Endothelial cell of umbilical vein (primary cell): ENCODE measurements at regions of chr3 and their contacts with region 1.

Region 1: DNA sequence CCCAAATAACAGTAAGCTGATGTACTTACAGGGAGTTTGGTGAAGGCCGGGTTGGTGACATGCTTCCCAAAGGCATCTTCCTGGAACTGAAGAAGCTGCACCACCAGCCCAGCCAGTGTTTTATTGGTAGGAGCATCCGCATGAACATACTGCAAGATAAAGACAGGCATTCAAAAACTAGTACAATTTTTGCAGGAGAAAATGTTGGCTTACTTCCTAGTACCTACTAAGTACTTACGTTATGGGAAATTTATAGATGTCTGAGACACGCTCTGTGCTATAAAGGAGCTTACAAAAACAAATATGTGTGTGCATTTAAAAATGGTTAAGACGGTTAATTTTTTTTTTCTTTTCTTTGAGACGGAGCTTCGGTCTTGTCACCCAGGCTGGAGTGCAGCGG is 8.9 kb downstream of the SMARCC1 start:
- DNase-seq: no peak
- H3K4me3 ChIP-seq: no peak overlapping the region
- H3K27ac ChIP-seq: no peak overlapping the region
- H3K4me1 ChIP-seq: no peaks in the 10 kb centered on the region
- H3K27me3 ChIP-seq: no peaks in the 10 kb centered on the region
- CTCF ChIP-seq: no peak
- POLR2A ChIP-seq: no peak

Region 2: DNA sequence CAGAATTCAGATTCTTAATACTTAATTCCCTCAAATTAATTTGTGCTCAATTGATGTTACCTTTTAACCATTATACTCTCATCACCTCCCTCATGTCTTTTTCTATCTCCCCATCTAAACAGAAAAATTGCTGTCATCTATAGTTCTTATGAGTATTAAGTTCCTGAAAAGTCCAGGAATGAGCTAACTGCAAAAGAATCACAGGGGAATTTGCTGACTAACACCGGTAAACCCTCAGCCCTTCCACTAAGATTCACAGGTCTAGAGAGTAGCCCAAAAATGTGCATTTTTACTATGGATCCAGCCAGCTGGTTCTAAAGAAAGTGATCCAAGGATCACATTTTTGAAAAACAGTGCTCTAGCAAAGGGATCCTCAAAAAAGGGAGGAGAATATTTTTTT is 675.8 kb before region 1 on chr3:
- CTCF ChIA-PET with region 1: no interaction called
- POLR2A ChIA-PET with region 1: no interaction called
- dilution Hi-C with region 1: no loop called
- intact Hi-C with region 1: no loop called
- DNase-seq: no peak
- H3K4me3 ChIP-seq: no peak overlapping the region
- H3K27ac ChIP-seq: no peak overlapping the region
- H3K4me1 ChIP-seq: no peaks in the 10 kb centered on the region
- H3K27me3 ChIP-seq: no peaks in the 10 kb centered on the region
- CTCF ChIP-seq: no peak
- POLR2A ChIP-seq: no peak

Region 3: GRCh38 chr3:47762233-47762632 is 10.6 kb before region 1 on chr3:
- CTCF ChIA-PET with region 1: interaction called, 10 read pairs
- POLR2A ChIA-PET with region 1: interaction called, 3 read pairs
- dilution Hi-C with region 1: no loop called
- intact Hi-C with region 1: no loop called
- DNase-seq: no peak
- H3K4me3 ChIP-seq: no peak overlapping the region
- H3K27ac ChIP-seq: no peak overlapping the region
- H3K4me1 ChIP-seq: no peaks in the 10 kb centered on the region
- H3K27me3 ChIP-seq: no peaks in the 10 kb centered on the region
- CTCF ChIP-seq: no peak
- POLR2A ChIP-seq: no peak